Activated CD4-positive, alpha-beta memory T cell treated with anti-CD3 and anti-CD28 coated beads for 36 hours (primary cell): ENCODE measurements at regions of chr4 and their contacts with region 1.

Region 1: GRCh38 chr4:83284193-83285054 is at the start of gene COQ2:
- DNase-seq: peak; percentile 96
- H3K4me3 Mint-ChIP-seq: peak within 1 kb of the TSS; percentile 85
- H3K27ac Mint-ChIP-seq: peak within 1 kb of the TSS; percentile 89
- H3K4me1 Mint-ChIP-seq: peaks cover 39% of the 10 kb centered on the region
- H3K27me3 Mint-ChIP-seq: no peaks in the 10 kb centered on the region
- total RNA-seq, gene COQ2: 15.9 to 18.7 TPM

Region 2: GRCh38 chr4:82373816-82374625 is 910.4 kb before region 1 on chr4 and contains the start of gene HNRNPD:
- CTCF ChIA-PET with region 1: no interaction called
- POLR2A ChIA-PET with region 1: no interaction called
- intact Hi-C with region 1: loop called (anchors 5 kb)
- DNase-seq: peak; percentile 96
- H3K4me3 Mint-ChIP-seq: peak within 1 kb of the TSS; percentile 97
- H3K27ac Mint-ChIP-seq: peak within 1 kb of the TSS; percentile 97
- H3K4me1 Mint-ChIP-seq: peaks cover 35% of the 10 kb centered on the region
- H3K27me3 Mint-ChIP-seq: no peaks in the 10 kb centered on the region
- total RNA-seq, gene HNRNPD: 398 to 400 TPM

Region 3: DNA sequence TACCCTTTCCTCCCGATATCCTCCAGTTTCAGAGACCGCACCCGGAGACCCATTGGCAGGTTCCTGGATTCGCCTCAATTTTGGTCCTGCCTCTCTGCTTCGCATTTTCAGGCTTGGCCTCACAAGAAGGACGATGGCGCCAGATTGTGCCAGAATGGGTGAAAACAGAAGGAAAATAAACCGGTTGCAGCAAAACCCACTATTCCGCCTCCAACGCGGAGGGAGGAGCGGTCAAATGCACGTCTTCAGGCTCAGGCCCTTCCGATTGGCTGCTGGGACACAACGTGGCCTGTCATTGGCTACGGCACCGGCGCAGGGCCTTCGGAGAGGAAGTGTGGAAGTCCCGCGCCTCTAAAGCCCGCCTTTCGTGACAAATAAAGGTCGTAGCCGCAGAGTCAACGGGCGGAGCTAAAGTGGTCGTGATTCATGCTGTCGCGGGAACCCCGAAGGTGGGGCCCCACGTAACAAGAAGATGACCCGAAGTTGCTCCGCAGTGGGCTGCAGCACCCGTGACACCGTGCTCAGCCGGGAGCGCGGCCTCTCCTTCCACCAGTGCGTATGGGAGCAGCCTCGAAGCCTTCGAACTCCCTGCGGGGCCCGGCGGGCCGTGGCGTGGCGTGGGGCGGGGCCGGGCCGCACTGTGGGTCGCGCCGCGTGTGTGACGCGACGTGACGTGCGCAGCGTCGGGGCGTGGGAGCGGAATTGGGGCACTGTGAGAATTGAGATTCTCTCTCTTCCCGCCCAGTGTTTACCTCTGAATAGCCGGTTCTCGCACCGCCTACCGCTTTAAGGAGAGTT is 383.9 kb before region 1 on chr4 and contains the start of gene THAP9:
- CTCF ChIA-PET with region 1: interaction called, 4 read pairs
- POLR2A ChIA-PET with region 1: no interaction called
- intact Hi-C with region 1: loop called (anchors 2 kb)
- DNase-seq: peak; percentile 99
- H3K4me3 Mint-ChIP-seq: no peak within 1 kb of the TSS
- H3K27ac Mint-ChIP-seq: no peak within 1 kb of the TSS
- H3K4me1 Mint-ChIP-seq: peaks cover 36% of the 10 kb centered on the region
- H3K27me3 Mint-ChIP-seq: no peaks in the 10 kb centered on the region
- total RNA-seq, gene THAP9: 2.3 to 2.4 TPM

Region 4: DNA sequence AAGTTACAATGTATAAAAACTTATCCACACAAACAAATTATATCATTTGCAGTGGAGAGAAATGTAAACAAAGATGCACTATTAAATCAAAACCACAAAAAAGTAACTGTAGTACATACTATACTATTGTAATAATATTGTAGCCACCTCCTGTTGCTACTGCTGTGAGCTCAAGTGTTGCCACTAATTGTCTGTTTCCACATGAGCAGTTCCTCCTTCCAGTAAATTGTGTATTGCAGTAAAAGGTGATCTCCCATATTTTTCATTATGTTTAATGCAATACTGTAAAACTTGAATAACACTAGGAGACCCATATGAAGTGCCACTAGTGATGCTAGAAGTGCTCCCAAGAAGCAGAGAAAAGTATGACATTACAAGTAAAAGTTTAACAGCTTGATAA is 285.5 kb before region 1 on chr4:
- CTCF ChIA-PET with region 1: no interaction called
- POLR2A ChIA-PET with region 1: no interaction called
- intact Hi-C with region 1: no loop called
- DNase-seq: no peak
- H3K4me3 Mint-ChIP-seq: no peak overlapping the region
- H3K27ac Mint-ChIP-seq: no peak overlapping the region
- H3K4me1 Mint-ChIP-seq: peaks cover 14% of the 10 kb centered on the region
- H3K27me3 Mint-ChIP-seq: no peaks in the 10 kb centered on the region

Region 5: DNA sequence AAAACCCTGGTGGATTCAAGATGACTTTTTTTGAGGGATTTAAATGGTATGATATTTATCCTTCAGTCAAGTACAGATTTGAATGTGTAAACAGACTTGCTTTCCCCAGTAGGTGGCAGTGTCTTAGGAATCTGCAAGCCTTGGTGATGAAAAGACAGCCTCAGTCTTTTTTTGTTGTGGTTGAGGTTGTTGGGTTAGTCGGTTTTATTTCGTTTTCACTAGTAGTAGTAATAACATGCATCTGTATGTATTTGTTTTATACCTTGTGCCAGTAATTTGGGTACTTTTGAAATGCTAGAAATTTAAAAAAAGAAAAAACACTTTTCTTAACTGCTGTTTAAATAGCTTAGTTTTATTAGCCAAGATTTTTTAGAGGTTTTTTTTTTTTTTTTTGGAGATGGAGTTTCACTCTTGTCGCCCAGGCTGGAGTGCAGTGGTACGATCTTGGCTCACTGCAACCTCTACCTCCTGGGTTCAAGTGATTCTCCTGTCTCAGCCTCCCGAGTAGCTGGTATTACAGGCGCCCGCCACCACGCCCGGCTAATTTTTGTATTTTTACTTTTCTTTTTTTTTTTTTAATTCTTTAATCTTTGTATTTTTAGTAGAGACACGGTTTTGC is 210.2 kb before region 1 on chr4:
- CTCF ChIA-PET with region 1: interaction called, 17 read pairs
- POLR2A ChIA-PET with region 1: interaction called, 6 read pairs
- intact Hi-C with region 1: loop called (anchors 1 kb)
- DNase-seq: peak; percentile 49
- H3K4me3 Mint-ChIP-seq: peak overlapping the region; percentile 16
- H3K27ac Mint-ChIP-seq: no peak overlapping the region
- H3K4me1 Mint-ChIP-seq: peaks cover 8% of the 10 kb centered on the region
- H3K27me3 Mint-ChIP-seq: no peaks in the 10 kb centered on the region

Region 6: GRCh38 chr4:83237591-83237990 is 46.8 kb before region 1 on chr4:
- CTCF ChIA-PET with region 1: interaction called, 19 read pairs
- POLR2A ChIA-PET with region 1: no interaction called
- intact Hi-C with region 1: no loop called
- DNase-seq: no peak
- H3K4me3 Mint-ChIP-seq: no peak overlapping the region
- H3K27ac Mint-ChIP-seq: no peak overlapping the region
- H3K4me1 Mint-ChIP-seq: peaks cover 36% of the 10 kb centered on the region
- H3K27me3 Mint-ChIP-seq: peaks cover 41% of the 10 kb centered on the region

Region 7: DNA sequence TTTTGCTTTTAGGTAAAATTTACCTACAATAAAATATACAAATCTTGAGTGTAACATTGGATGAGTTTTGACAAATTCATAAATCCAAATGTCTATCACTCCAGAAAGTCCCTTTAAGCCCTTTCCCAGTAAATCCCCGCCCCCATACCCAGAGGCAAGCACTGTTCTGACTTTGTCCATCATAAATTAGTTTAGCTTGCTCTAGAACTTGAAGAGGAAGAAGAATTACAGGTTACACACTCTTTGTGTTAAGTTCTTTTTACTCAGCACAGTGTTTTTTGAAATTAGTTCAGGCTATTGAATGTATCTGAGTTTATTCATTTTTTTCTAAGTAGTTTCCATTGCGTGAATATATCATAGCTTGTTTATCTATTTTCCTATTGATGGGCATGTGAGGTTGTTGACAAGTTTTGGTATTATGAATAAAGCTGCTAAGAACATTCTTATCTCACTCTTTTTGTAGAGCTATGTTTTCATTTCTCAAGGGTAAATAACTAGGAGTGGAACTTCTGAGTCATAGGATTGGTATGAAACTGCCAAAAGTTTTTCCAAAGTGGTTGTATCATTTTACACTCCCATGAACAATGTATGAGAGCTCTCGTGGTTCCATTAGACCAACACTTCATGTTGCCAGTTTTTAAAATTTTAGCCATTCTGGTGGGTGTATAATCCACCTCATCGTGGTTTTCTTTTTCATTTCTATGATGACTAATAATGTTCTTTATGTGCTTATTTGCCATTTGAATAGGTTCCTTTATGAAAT is 72.7 kb after region 1 on chr4:
- CTCF ChIA-PET with region 1: interaction called, 5 read pairs
- POLR2A ChIA-PET with region 1: interaction called, 13 read pairs
- intact Hi-C with region 1: loop called (anchors 1 kb)
- DNase-seq: peak; percentile 65
- H3K4me3 Mint-ChIP-seq: peak overlapping the region; percentile 41
- H3K27ac Mint-ChIP-seq: peak overlapping the region; percentile 86
- H3K4me1 Mint-ChIP-seq: peaks cover 17% of the 10 kb centered on the region
- H3K27me3 Mint-ChIP-seq: no peaks in the 10 kb centered on the region

Region 8: DNA sequence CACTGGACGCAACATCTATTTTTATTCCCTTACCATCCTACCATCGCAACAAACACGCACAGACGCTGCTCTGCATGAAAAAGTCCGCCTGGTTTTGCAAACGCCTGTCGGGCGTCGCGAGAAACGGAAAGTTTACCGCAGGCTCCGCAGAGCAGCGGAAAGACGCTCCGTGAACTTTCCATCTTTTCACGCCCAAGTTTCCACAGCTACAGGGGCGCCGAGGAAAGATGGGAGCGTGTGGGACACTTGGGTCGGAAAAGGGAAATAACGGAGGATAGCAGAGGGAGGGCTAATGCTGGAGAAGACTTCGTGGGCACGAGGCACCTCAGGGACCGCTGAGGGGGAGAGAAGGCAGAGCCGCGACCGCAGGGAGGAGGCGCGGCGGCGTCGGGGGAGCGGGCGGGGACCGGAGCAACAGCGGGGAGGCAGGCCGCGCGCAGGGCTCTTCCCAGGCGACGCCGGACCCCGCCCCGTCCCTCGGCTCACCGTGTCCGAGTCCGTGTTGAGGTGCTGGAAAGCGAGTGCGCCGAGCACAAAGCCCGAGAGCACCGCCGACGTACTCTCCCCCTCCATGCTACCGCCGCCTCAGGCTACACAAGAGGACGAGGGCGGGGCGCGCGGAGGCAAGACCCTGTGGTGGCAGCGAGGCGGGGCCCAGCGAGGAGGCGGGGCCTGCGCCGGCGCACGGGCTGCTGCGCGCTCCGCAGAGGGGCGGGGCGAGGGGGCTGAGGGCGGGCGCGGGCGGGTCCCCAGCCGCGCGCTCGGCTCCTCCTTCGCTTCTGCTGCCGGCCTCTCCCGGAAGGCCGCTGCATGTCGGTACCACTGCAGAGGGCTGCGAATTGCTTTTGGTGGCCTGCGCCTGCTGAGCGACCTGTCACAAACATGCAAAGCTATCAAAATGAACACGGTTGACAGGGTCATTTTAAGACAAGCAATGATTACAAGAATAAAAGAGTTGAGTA is 200.4 kb after region 1 on chr4 and contains the start of gene ABRAXAS1:
- CTCF ChIA-PET with region 1: no interaction called
- POLR2A ChIA-PET with region 1: interaction called, 4 read pairs
- intact Hi-C with region 1: loop called (anchors 1 kb)
- DNase-seq: peak; percentile 95
- H3K4me3 Mint-ChIP-seq: peak within 1 kb of the TSS; percentile 91
- H3K27ac Mint-ChIP-seq: peak within 1 kb of the TSS; percentile 94
- H3K4me1 Mint-ChIP-seq: peaks cover 14% of the 10 kb centered on the region
- H3K27me3 Mint-ChIP-seq: no peaks in the 10 kb centered on the region
- total RNA-seq, gene ABRAXAS1: 17.5 to 18.0 TPM